Activated naive CD8-positive, alpha-beta T cell treated with anti-CD3 and anti-CD28 coated beads, Interleukin-2, amount 10 ng/mL, durations not matched to agents 7 days and 5 days (primary cell): ENCODE measurements at regions of chr12 and their contacts with region 1.

Region 1: GRCh38 chr12:6470375-6471163 is at the start of gene VAMP1:
- DNase-seq: peak; percentile 97
- ATAC-seq: peak; percentile 91
- H3K4me3 Mint-ChIP-seq: peak within 1 kb of the TSS; percentile 95
- H3K27ac Mint-ChIP-seq: peak within 1 kb of the TSS; percentile 88
- H3K4me1 Mint-ChIP-seq: peaks cover 43% of the 10 kb centered on the region
- H3K27me3 Mint-ChIP-seq: peaks cover 8% of the 10 kb centered on the region
- total RNA-seq, gene VAMP1: 65.5 to 72.1 TPM

Region 2: GRCh38 chr12:6396031-6396430 is 74.5 kb before region 1 on chr12:
- POLR2A ChIA-PET with region 1: no interaction called
- DNase-seq: no peak
- ATAC-seq: no peak
- H3K4me3 Mint-ChIP-seq: no peak overlapping the region
- H3K27ac Mint-ChIP-seq: no peak overlapping the region
- H3K4me1 Mint-ChIP-seq: no peaks in the 10 kb centered on the region
- H3K27me3 Mint-ChIP-seq: peaks cover 7% of the 10 kb centered on the region

Region 3: GRCh38 chr12:6423267-6424007 is 47.1 kb before region 1 on chr12:
- POLR2A ChIA-PET with region 1: interaction called, 65 read pairs
- DNase-seq: peak; percentile 69
- ATAC-seq: peak; percentile 81
- H3K4me3 Mint-ChIP-seq: no peak overlapping the region
- H3K27ac Mint-ChIP-seq: peak overlapping the region; percentile 76
- H3K4me1 Mint-ChIP-seq: peaks cover 45% of the 10 kb centered on the region
- H3K27me3 Mint-ChIP-seq: peaks cover 7% of the 10 kb centered on the region

Region 4: DNA sequence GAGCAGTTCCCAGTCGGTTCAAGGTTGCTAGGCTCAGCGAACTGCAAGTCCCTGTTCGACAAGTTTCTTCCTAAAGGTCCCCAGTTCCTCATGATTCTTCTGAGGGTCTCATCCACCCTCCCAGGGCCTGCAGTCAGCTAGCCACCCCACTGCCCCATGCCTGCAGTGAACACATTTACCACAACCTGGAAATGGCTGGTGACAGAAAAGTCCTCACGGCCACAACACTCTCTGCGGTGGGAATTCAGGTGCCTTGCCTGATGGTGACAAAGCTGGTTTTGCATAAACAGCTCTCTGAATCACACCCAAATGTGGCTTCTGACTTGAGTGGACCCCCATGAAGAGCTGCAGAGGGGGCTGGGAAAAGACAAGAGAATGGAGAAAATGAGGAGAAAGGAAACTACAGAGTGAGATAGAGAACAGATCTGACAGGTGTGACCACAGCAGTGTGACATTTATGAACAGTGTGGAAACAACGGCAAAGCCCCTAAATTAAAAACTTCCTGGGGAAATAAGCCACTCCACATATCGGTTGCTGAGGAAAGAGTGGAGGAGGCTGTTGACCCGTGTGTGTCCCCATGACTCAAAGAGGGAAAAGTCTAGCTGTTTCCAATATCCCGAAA is 27.1 kb before region 1 on chr12:
- POLR2A ChIA-PET with region 1: interaction called, 177 read pairs
- DNase-seq: no peak
- ATAC-seq: peak; percentile 12
- H3K4me3 Mint-ChIP-seq: peak overlapping the region; percentile 94
- H3K27ac Mint-ChIP-seq: peak overlapping the region; percentile 94
- H3K4me1 Mint-ChIP-seq: peaks cover 54% of the 10 kb centered on the region
- H3K27me3 Mint-ChIP-seq: no peaks in the 10 kb centered on the region

Region 5: GRCh38 chr12:6493497-6494257 is 23.1 kb after region 1 on chr12 and contains the start of gene NCAPD2:
- POLR2A ChIA-PET with region 1: interaction called, 108 read pairs
- DNase-seq: peak; percentile 94
- ATAC-seq: peak; percentile 87
- H3K4me3 Mint-ChIP-seq: peak within 1 kb of the TSS; percentile 97
- H3K27ac Mint-ChIP-seq: peak within 1 kb of the TSS; percentile 97
- H3K4me1 Mint-ChIP-seq: peaks cover 28% of the 10 kb centered on the region
- H3K27me3 Mint-ChIP-seq: no peaks in the 10 kb centered on the region
- total RNA-seq, gene NCAPD2: 147 to 157 TPM

Region 6: GRCh38 chr12:6540181-6540877 is 69.8 kb after region 1 on chr12:
- POLR2A ChIA-PET with region 1: interaction called, 72 read pairs
- DNase-seq: peak; percentile 73
- ATAC-seq: peak; percentile 49
- H3K4me3 Mint-ChIP-seq: peak overlapping the region; percentile 78
- H3K27ac Mint-ChIP-seq: peak overlapping the region; percentile 80
- H3K4me1 Mint-ChIP-seq: peaks cover 49% of the 10 kb centered on the region
- H3K27me3 Mint-ChIP-seq: no peaks in the 10 kb centered on the region

Region 7: GRCh38 chr12:6574576-6575295 is 104.2 kb after region 1 on chr12:
- POLR2A ChIA-PET with region 1: no interaction called
- DNase-seq: no peak
- ATAC-seq: no peak
- H3K4me3 Mint-ChIP-seq: no peak overlapping the region
- H3K27ac Mint-ChIP-seq: no peak overlapping the region
- H3K4me1 Mint-ChIP-seq: peaks cover 11% of the 10 kb centered on the region
- H3K27me3 Mint-ChIP-seq: no peaks in the 10 kb centered on the region